Calu3 (cell line): ENCODE measurements at regions of chr4 and their contacts with region 1.

Region 1: DNA sequence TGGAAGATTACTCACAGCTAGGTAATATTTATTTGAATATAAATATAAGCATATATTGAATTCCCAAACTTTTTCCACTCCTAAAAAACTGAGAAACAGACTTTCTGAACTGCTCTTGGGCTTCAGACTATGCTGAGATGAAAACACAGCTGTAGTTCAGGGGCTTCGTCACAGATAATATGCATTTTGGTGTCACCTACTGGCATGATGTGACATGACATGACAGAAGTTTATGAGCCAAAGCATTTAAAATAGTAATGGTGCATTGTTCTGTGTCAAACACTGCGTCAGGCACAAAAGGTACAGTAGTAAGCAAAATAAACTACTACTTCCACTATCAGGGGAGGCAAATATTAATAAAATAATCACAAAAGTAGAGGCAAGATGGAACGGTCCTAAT is 171.3 kb downstream of the BTC start:
- DNase-seq: peak; percentile 54
- H3K4me3 Mint-ChIP-seq: no peak overlapping the region
- H3K27ac Mint-ChIP-seq: peak overlapping the region; percentile 89
- H3K4me1 Mint-ChIP-seq: peaks cover 74% of the 10 kb centered on the region
- H3K27me3 Mint-ChIP-seq: no peaks in the 10 kb centered on the region
- CTCF ChIP-seq: no peak

Region 2: GRCh38 chr4:74376888-74377483 is 246.1 kb before region 1 on chr4:
- CTCF ChIA-PET with region 1: no interaction called
- intact Hi-C with region 1: loop called (anchors 5 kb)
- DNase-seq: no peak
- H3K4me3 Mint-ChIP-seq: peak overlapping the region; percentile 77
- H3K27ac Mint-ChIP-seq: peak overlapping the region; percentile 95
- H3K4me1 Mint-ChIP-seq: peaks cover 10% of the 10 kb centered on the region
- H3K27me3 Mint-ChIP-seq: no peaks in the 10 kb centered on the region
- CTCF ChIP-seq: no peak

Region 3: DNA sequence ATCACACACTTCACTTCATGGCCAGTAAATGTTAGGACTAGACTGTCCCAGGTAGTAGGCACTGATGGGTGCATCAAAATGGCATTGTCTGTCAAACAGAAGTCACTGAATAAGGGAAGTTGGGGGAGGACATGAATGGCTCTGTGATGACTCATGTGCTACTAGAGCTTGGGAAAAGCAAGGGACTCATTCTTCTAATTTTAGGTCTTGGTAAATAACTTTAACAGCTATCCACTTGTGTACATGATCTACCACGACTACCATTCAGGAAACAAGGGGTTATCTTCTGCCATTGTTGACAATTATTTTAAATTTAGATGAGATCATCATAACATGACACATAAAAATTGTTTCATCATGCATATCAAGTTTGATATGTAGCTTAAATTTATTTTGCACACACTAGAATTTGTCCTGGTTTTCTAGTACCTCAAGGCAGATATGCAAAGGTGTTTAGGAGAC is 171.8 kb before region 1 on chr4:
- CTCF ChIA-PET with region 1: interaction called, 3 read pairs
- intact Hi-C with region 1: loop called (anchors 5 kb)
- DNase-seq: peak; percentile 44
- H3K4me3 Mint-ChIP-seq: peak overlapping the region; percentile 64
- H3K27ac Mint-ChIP-seq: peak overlapping the region; percentile 74
- H3K4me1 Mint-ChIP-seq: peaks cover 32% of the 10 kb centered on the region
- H3K27me3 Mint-ChIP-seq: no peaks in the 10 kb centered on the region
- CTCF ChIP-seq: no peak

Region 4: GRCh38 chr4:74539044-74539790 is 83.8 kb before region 1 on chr4:
- CTCF ChIA-PET with region 1: interaction called, 37 read pairs
- intact Hi-C with region 1: loop called (anchors 1 kb)
- DNase-seq: no peak
- H3K4me3 Mint-ChIP-seq: peak overlapping the region; percentile 34
- H3K27ac Mint-ChIP-seq: peak overlapping the region; percentile 99
- H3K4me1 Mint-ChIP-seq: peaks cover 22% of the 10 kb centered on the region
- H3K27me3 Mint-ChIP-seq: no peaks in the 10 kb centered on the region
- CTCF ChIP-seq: no peak

Region 5: DNA sequence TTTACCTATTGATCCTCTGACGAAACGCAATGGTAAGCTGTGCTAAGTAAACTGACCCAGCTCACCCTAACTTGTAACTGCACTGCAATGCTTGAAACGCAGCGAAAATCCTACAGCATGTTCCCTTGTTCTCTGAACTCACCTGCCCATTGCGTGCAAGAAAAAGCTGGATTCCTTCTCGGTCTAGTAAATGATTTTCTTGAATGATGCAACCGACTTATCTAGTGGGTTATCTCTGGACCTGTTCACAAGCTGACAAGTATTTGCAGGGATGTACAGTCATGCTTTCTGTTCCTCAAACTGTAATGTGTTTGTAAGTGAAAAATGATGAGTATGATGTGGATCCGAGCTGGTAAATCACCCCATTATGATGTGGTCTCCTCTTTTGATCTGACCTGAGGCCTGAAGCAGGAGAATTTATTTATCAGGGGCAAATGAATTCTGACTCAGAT is 31.2 kb after region 1 on chr4:
- CTCF ChIA-PET with region 1: interaction called, 10 read pairs
- intact Hi-C with region 1: no loop called
- DNase-seq: peak; percentile 80
- H3K4me3 Mint-ChIP-seq: peak overlapping the region; percentile 37
- H3K27ac Mint-ChIP-seq: peak overlapping the region; percentile 94
- H3K4me1 Mint-ChIP-seq: peaks cover 37% of the 10 kb centered on the region
- H3K27me3 Mint-ChIP-seq: no peaks in the 10 kb centered on the region
- CTCF ChIP-seq: no peak

Region 6: GRCh38 chr4:74675673-74676279 is 52.7 kb after region 1 on chr4:
- CTCF ChIA-PET with region 1: interaction called, 25 read pairs
- intact Hi-C with region 1: loop called (anchors 1 kb)
- DNase-seq: peak; percentile 47
- H3K4me3 Mint-ChIP-seq: no peak overlapping the region
- H3K27ac Mint-ChIP-seq: peak overlapping the region; percentile 29
- H3K4me1 Mint-ChIP-seq: peaks cover 43% of the 10 kb centered on the region
- H3K27me3 Mint-ChIP-seq: no peaks in the 10 kb centered on the region
- CTCF ChIP-seq: peak; percentile 51